ENCODE measurements at regions of chr14 and their contacts with region 1.

Region 1: GRCh38 chr14:77053046-77053841 is 24.7 kb upstream of the IRF2BPL start:
- DNase-seq: no peak
- ATAC-seq: peak; percentile 98
- H3K4me3 ChIP-seq: no peak overlapping the region
- H3K27ac ChIP-seq: no peak overlapping the region
- H3K4me1 ChIP-seq: peaks cover 12% of the 10 kb centered on the region
- H3K27me3 ChIP-seq: no peaks in the 10 kb centered on the region
- CTCF ChIP-seq: peak; percentile 77 to 90 (median 85)
- EP300 ChIP-seq: no peak
- POLR2A ChIP-seq: no peak
- RAD21 ChIP-seq: peak; percentile 91

Region 2: DNA sequence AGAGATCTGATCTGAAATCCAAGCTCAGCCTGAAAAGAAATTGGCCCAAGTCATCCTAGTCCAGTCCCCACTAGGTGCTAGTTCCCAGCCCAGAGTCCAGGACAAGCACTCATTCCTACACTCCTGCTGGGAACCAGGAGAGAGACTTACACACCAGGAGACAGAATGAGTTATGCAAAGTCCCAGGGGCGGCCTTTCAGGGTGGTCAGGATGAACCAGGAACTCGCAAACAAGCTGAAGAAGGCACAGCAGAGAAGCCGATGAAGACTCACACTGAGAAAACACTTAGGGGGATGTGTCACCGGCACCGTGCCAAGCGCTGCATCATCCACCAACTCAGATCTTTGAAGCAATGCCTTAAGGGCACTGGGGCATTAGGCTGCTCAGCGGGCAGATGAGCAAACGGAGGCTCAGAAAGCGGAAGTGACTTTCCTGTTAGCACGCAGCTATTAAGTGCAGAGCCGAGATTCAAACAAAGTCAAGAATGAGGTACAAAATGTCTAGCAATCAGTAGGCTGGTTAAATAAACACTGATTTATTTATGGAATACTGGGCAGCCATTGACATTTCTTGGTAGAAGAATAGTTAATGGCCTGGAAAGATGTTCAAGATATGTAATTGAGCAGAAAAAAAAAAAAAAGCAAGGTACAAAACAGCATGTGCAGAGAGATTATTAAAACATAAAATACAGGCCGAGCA is 148.4 kb before region 1 on chr14:
- CTCF ChIA-PET with region 1: interaction called, 170 read pairs
- POLR2A ChIA-PET with region 1: no interaction called
- RAD21 ChIA-PET with region 1: interaction called, 119 read pairs
- SMC1A ChIA-PET with region 1: interaction called, 174 read pairs
- in situ Hi-C with region 1: no loop called
- intact Hi-C with region 1: no loop called
- DNase-seq: peak; percentile 84
- ATAC-seq: peak; percentile 93
- H3K4me3 ChIP-seq: no peak overlapping the region
- H3K27ac ChIP-seq: peak overlapping the region; percentile 38
- H3K4me1 ChIP-seq: peaks cover 11% of the 10 kb centered on the region
- H3K27me3 ChIP-seq: no peaks in the 10 kb centered on the region
- CTCF ChIP-seq: no peak
- EP300 ChIP-seq: no peak
- POLR2A ChIP-seq: no peak
- RAD21 ChIP-seq: no peak

Region 3: DNA sequence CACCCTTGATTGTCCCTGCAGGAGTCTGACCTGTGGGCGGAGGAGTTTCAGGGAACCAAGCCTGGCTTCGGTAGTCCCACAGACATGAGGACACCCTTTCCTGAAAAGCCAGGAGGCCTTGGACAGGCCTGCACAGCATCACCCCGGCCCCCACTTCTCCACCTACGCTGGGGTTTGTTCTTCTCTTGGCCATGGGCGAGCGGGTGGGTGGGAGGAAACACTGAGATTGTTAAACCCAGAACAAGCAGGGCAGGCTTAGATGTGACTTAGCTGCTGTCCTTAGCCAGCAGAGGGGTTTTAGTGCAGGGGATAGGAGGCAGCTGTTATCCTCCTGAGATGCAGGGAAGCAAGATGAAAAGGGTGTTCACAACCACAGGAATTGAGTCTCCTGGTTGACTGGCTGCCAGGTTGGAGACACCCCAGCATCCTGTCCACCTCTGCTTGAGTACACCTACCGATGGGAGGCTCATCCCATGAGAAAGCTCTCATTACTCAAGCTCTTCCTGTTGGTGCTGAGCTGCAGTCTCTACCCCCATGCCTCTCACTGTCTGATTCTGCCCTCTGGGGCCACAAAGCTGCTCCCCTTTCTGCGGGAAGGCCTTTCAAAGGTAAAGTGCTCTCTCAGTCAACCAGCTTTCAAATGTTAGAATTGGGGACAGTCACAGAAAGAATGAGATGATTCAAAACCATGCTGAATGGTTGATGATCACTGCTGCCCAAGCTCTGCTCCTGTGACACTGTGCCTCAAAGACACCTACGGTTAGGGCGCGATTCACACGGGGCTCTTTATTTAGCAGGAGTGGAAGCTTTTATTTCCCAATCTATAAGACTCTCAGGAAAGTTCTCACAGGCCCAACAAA is 111.1 kb before region 1 on chr14:
- CTCF ChIA-PET with region 1: interaction called, 26 read pairs
- POLR2A ChIA-PET with region 1: interaction called, 4 read pairs
- RAD21 ChIA-PET with region 1: interaction called, 24 read pairs
- SMC1A ChIA-PET with region 1: interaction called, 18 read pairs
- in situ Hi-C with region 1: no loop called
- intact Hi-C with region 1: no loop called
- DNase-seq: peak; percentile 72
- ATAC-seq: peak; percentile 29
- H3K4me3 ChIP-seq: no peak overlapping the region
- H3K27ac ChIP-seq: no peak overlapping the region
- H3K4me1 ChIP-seq: peaks cover 21% of the 10 kb centered on the region
- H3K27me3 ChIP-seq: no peaks in the 10 kb centered on the region
- CTCF ChIP-seq: no peak; a peak in 1 of 6 replicates
- EP300 ChIP-seq: no peak
- POLR2A ChIP-seq: no peak
- RAD21 ChIP-seq: no peak

Region 4: GRCh38 chr14:76956316-76957090 is 96.7 kb before region 1 on chr14:
- CTCF ChIA-PET with region 1: interaction called, 23 read pairs
- POLR2A ChIA-PET with region 1: interaction called, 6 read pairs
- RAD21 ChIA-PET with region 1: interaction called, 48 read pairs
- SMC1A ChIA-PET with region 1: interaction called, 24 read pairs
- in situ Hi-C with region 1: no loop called
- intact Hi-C with region 1: loop called (anchors 1 kb)
- DNase-seq: no peak
- ATAC-seq: peak; percentile 49
- H3K4me3 ChIP-seq: peak overlapping the region; percentile 68
- H3K27ac ChIP-seq: peak overlapping the region; percentile 100
- H3K4me1 ChIP-seq: peaks cover 73% of the 10 kb centered on the region
- H3K27me3 ChIP-seq: no peaks in the 10 kb centered on the region
- CTCF ChIP-seq: no peak
- EP300 ChIP-seq: peak; percentile 18 to 69; a peak in 2 of 4 replicates
- POLR2A ChIP-seq: peak; percentile 62
- RAD21 ChIP-seq: no peak

Region 5: DNA sequence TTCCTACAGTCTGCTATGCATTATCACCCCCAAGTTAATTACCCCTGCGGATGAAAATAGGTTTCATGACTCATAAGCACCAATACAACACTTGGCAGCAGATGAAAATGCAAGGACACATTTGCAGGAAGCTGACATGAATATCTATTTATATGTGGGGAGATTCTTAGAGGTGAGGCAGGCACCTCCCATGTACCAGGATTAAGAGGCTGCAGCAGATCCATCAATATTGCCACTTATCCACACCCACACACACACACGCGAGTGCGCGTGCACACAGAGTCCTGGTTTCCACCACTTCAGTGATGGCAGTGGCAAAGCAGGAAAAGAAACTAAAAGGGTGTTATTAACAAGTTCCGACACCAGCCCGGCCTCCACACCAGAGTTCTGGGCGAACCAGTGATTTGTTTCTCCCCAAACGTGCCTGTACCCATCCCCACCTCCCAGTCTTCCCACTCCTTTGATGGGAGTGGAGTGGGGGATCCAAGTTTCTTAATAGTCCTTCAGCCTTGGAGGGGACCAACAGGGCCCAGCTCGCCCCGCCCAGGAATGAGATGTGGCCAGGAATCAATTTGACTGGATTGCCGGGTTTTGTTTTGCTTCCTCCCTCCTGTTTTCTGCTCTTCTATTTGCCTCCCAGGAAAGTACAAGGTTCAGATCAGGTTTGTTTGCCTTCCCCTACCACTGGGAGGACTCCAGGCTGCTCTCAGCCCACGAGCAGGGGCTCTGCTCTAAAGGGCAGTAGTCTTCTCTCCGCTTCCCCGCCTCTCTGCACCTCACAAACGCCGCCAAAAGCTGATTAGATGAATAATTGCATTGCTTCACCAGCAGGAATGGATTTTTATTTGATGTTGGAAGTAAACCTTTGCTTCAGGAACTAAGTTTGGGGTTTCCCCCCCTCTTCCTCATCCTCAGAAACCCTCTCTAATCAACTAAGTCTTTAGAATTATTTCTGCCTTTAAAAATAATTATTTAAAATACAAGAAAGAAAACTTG is 29.9 kb before region 1 on chr14:
- CTCF ChIA-PET with region 1: interaction called, 16 read pairs
- POLR2A ChIA-PET with region 1: interaction called, 151 read pairs
- RAD21 ChIA-PET with region 1: interaction called, 9 read pairs
- SMC1A ChIA-PET with region 1: interaction called, 23 read pairs
- in situ Hi-C with region 1: no loop called
- intact Hi-C with region 1: loop called (anchors 2 kb)
- DNase-seq: no peak
- ATAC-seq: peak; percentile 7
- H3K4me3 ChIP-seq: no peak overlapping the region
- H3K27ac ChIP-seq: peak overlapping the region; percentile 56
- H3K4me1 ChIP-seq: peaks cover 51% of the 10 kb centered on the region
- H3K27me3 ChIP-seq: no peaks in the 10 kb centered on the region
- CTCF ChIP-seq: 0 out of 6 replicates have a peak, but pooled peaks of 2 of the 3 experiments have one; percentile 2 to 14
- EP300 ChIP-seq: no peak
- POLR2A ChIP-seq: no peak
- RAD21 ChIP-seq: no peak

Region 6: DNA sequence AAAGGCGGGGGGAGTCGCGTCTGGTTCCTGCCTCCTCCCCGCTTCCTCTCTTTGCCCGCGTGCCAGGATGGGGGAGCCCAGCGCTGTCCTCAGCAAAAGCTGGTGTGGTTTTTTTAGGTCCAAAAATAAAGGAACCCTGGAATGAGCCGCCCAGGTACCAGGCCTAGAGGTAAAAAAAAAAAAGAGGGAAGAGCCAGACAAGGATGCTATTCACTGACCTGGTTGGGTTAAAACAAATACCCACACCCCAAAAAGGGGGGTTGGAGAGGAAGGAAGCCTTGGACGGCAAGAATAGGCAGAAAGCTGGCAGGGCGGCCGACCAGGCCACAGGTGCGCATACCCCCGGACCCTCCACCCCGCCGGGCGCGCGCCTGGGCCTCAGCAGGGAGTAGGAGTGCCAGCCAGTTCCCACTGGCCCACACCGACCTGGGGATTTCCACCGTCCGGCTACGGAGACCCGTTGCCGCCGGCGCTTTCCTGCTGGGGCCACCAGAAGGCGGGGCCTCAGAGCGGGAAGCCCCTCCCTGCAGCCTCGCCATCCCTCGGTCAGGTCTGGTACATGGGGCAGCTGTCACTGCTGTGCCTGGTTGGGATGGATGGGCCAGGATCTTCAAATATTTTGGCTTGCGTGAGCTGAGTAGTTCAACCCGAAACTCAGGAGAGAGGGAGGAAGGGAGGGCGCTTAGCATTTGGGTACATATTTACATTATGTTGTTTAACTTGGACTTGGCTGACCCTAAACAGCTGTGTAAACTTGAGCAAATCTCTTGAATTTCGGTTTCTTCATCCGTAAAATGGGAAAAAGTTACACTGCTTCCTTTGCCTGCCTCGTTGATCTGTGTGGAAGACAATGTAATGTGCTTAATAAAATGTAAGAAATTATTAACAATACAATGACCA is 19.4 kb before region 1 on chr14:
- CTCF ChIA-PET with region 1: interaction called, 72 read pairs
- POLR2A ChIA-PET with region 1: interaction called, 151 read pairs
- RAD21 ChIA-PET with region 1: interaction called, 11 read pairs
- SMC1A ChIA-PET with region 1: interaction called, 21 read pairs
- in situ Hi-C with region 1: no loop called
- intact Hi-C with region 1: loop called (anchors 2 kb)
- DNase-seq: peak; percentile 72
- ATAC-seq: peak; percentile 86
- H3K4me3 ChIP-seq: peak overlapping the region; percentile 78
- H3K27ac ChIP-seq: peak overlapping the region; percentile 99
- H3K4me1 ChIP-seq: peaks cover 61% of the 10 kb centered on the region
- H3K27me3 ChIP-seq: no peaks in the 10 kb centered on the region
- CTCF ChIP-seq: no peak
- EP300 ChIP-seq: peak in 1 of 2 experiments; percentile 47; a peak in 3 of 4 replicates
- POLR2A ChIP-seq: peak; percentile 85
- RAD21 ChIP-seq: no peak

Region 7: GRCh38 chr14:77108746-77109145 is 55.5 kb after region 1 on chr14:
- CTCF ChIA-PET with region 1: no interaction called
- POLR2A ChIA-PET with region 1: no interaction called
- RAD21 ChIA-PET with region 1: no interaction called
- SMC1A ChIA-PET with region 1: no interaction called
- in situ Hi-C with region 1: no loop called
- intact Hi-C with region 1: no loop called
- DNase-seq: no peak
- ATAC-seq: no peak
- H3K4me3 ChIP-seq: no peak overlapping the region
- H3K27ac ChIP-seq: no peak overlapping the region
- H3K4me1 ChIP-seq: no peaks in the 10 kb centered on the region
- H3K27me3 ChIP-seq: no peaks in the 10 kb centered on the region
- CTCF ChIP-seq: peak; percentile 9 to 33 (median 17); a peak in 3 of 6 replicates
- EP300 ChIP-seq: no peak
- POLR2A ChIP-seq: no peak
- RAD21 ChIP-seq: peak; percentile 58

Region 8: DNA sequence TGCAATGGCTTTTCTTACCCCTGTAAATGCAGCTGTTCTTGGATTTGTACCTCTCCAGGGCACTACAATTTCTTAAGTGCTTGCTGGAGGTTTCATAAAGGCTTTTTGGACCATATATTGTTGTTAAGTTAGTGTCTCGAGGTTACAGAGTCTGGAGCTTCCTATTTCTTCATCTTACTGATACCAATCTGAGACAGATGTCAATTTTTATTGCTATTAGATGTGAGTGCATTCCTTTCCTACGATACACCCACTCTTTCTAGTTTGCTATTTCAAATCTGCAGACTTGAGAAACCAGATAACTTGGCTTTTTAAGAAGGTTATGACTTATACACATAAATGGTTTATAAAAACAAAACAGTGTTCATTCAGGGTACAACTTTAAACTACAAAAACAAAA is 368.0 kb after region 1 on chr14:
- CTCF ChIA-PET with region 1: no interaction called
- POLR2A ChIA-PET with region 1: no interaction called
- RAD21 ChIA-PET with region 1: no interaction called
- SMC1A ChIA-PET with region 1: no interaction called
- in situ Hi-C with region 1: no loop called
- intact Hi-C with region 1: no loop called
- DNase-seq: no peak
- ATAC-seq: no peak
- H3K4me3 ChIP-seq: no peak overlapping the region
- H3K27ac ChIP-seq: no peak overlapping the region
- H3K4me1 ChIP-seq: no peaks in the 10 kb centered on the region
- H3K27me3 ChIP-seq: no peaks in the 10 kb centered on the region
- CTCF ChIP-seq: no peak
- EP300 ChIP-seq: no peak
- POLR2A ChIP-seq: no peak
- RAD21 ChIP-seq: no peak

Region 9: GRCh38 chr14:77565289-77565993 is 512.2 kb after region 1 on chr14:
- CTCF ChIA-PET with region 1: no interaction called
- POLR2A ChIA-PET with region 1: no interaction called
- RAD21 ChIA-PET with region 1: no interaction called
- SMC1A ChIA-PET with region 1: no interaction called
- in situ Hi-C with region 1: no loop called
- intact Hi-C with region 1: no loop called
- DNase-seq: no peak
- ATAC-seq: no peak
- H3K4me3 ChIP-seq: no peak overlapping the region
- H3K27ac ChIP-seq: no peak overlapping the region
- H3K4me1 ChIP-seq: no peaks in the 10 kb centered on the region
- H3K27me3 ChIP-seq: no peaks in the 10 kb centered on the region
- CTCF ChIP-seq: no peak
- EP300 ChIP-seq: no peak
- POLR2A ChIP-seq: no peak
- RAD21 ChIP-seq: no peak